Left ventricle myocardium inferior (tissue), 1 donor: ENCODE measurements at regions of chr20 and their contacts with region 1.

Region 1: GRCh38 chr20:19583532-19584175 is 174.4 kb upstream of the RIN2 start:
- DNase-seq: peak; percentile 68
- H3K4me3 ChIP-seq: no peak overlapping the region
- H3K27ac ChIP-seq: no peak overlapping the region
- H3K4me1 ChIP-seq: no peaks in the 10 kb centered on the region
- H3K27me3 ChIP-seq: peaks cover 67% of the 10 kb centered on the region
- CTCF ChIP-seq: peak; percentile 82

Region 2: GRCh38 chr20:19205977-19206396 is 377.7 kb before region 1 on chr20:
- intact Hi-C with region 1: loop called (anchors 5 kb)
- DNase-seq: peak; percentile 72
- H3K4me3 ChIP-seq: no peak overlapping the region
- H3K27ac ChIP-seq: no peak overlapping the region
- H3K4me1 ChIP-seq: peaks cover 4% of the 10 kb centered on the region
- H3K27me3 ChIP-seq: peaks cover 55% of the 10 kb centered on the region
- CTCF ChIP-seq: peak; percentile 93

Region 3: GRCh38 chr20:19628570-19629169 is 45.0 kb after region 1 on chr20:
- intact Hi-C with region 1: no loop called
- DNase-seq: no peak
- H3K4me3 ChIP-seq: no peak overlapping the region
- H3K27ac ChIP-seq: no peak overlapping the region
- H3K4me1 ChIP-seq: no peaks in the 10 kb centered on the region
- H3K27me3 ChIP-seq: no peaks in the 10 kb centered on the region
- CTCF ChIP-seq: peak; percentile 71

Region 4: DNA sequence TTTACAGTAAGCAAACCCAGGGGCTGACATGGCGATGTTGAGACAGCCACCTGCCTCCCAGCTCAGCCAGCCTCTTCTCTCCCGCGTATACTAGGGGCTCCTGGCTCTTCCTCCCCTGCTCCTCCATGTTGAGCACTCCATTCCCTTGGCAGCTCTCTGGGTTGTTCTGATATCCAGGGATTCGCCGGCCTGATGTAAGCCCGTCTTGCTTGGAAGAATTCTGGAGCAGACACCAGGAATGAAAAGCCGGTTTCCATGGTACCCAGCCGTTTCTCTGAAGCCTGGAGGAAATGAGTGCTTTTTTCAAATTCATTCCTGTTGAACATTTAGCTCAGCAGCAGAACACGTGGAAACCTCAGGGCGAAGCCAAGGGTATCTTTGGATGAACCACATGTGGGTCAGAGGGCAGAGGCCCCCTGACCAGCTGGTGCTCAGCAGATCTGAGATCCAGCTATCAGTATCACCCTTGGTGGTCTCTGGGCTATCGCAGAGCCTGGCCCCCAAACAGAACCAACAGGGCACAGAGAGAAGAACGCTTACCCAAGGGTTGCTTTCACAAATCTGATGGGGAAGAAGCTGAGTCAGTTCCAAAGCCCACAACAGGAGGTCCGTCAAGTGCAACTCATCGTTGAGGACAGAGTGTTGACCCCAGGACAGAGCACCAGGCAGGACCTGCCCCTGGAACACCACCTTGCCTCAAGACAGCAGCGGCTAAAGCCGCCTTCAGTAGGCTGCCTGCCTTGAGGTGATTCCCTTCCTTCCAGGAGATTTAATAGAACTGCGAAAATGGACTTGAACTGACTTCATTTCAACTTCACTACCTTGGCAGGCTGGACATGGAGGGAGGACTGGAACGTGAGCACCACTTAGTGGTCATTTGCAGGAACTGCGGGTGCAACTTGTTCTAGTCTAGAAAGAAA is 78.3 kb after region 1 on chr20:
- intact Hi-C with region 1: loop called (anchors 10 kb)
- DNase-seq: peak; percentile 36
- H3K4me3 ChIP-seq: no peak overlapping the region
- H3K27ac ChIP-seq: no peak overlapping the region
- H3K4me1 ChIP-seq: peaks cover 4% of the 10 kb centered on the region
- H3K27me3 ChIP-seq: peaks cover 76% of the 10 kb centered on the region
- CTCF ChIP-seq: peak; percentile 100